CD8-positive, alpha-beta T cell (primary cell): ENCODE measurements at regions of chr19 and their contacts with region 1.

Region 1: DNA sequence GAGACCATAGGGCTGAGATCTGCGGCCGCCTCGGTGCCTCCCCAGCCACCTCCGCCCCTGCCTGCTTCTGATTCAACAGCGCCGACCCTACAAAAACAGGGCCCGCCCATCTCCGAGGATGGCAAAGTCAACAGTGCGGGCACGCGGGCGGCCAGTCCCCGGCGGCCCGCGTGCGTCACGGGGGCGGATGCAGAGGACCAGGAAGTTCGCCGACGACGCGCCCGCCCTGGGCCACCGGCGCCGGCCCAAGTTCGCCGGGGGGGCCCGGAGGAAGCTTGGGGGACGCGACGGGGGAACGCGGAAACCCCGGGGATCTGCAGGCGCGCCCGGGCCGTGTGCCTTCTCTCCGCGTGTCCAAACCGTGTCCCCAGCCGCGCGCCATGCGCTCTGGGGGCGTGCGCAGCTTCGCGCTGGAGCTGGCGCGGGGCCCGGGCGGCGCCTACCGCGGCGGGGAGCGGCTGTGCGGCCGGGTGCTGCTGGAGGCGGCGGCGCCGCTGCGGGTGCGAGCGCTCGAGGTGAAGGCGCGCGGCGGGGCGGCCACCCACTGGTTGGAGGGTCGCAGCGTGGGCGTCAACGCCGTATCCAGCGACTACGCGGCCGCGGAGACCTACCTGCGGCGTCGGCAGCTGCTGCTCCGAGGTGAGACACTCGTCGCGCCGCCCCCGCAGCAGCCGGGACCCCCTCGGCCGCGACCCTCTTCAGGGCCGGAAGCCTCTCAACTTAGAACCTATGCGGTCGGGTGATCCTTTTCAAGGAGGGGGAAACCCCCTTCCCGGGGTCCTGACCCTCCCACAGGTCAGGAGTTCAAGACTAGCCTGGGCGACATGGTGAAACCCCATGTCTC is 6.8 kb upstream of the ARRDC2 start:
- DNase-seq: peak; percentile 90 to 99 (median 96)
- ATAC-seq: peak; percentile 81
- H3K4me3 ChIP-seq: peak overlapping the region; percentile 65 to 69
- H3K4me3 Mint-ChIP-seq: peak overlapping the region; percentile 92
- H3K27ac ChIP-seq: peak overlapping the region; percentile 94
- H3K27ac Mint-ChIP-seq: peak overlapping the region; percentile 98
- H3K4me1 ChIP-seq: peaks cover 29% of the 10 kb centered on the region
- H3K4me1 Mint-ChIP-seq: peaks cover 32% of the 10 kb centered on the region
- H3K27me3 ChIP-seq: no peaks in the 10 kb centered on the region
- H3K27me3 Mint-ChIP-seq: no peaks in the 10 kb centered on the region
- CTCF ChIP-seq: no peak

Region 2: GRCh38 chr19:17703824-17704463 is 297.2 kb before region 1 on chr19:
- CTCF ChIA-PET with region 1: interaction called, 3 read pairs
- POLR2A ChIA-PET with region 1: no interaction called
- intact Hi-C with region 1: loop called in 1 of 2 experiments (anchors 10 kb)
- DNase-seq: peak; percentile 52 to 83 (median 73)
- ATAC-seq: peak; percentile 99
- H3K4me3 ChIP-seq: no peak overlapping the region
- H3K4me3 Mint-ChIP-seq: no peak overlapping the region
- H3K27ac ChIP-seq: no peak overlapping the region
- H3K27ac Mint-ChIP-seq: no peak overlapping the region
- H3K4me1 ChIP-seq: no peaks in the 10 kb centered on the region
- H3K4me1 Mint-ChIP-seq: no peaks in the 10 kb centered on the region
- H3K27me3 ChIP-seq: no peaks in the 10 kb centered on the region
- H3K27me3 Mint-ChIP-seq: peaks cover 9% of the 10 kb centered on the region
- CTCF ChIP-seq: peak; percentile 89

Region 3: GRCh38 chr19:17784201-17785008 is 216.8 kb before region 1 on chr19:
- CTCF ChIA-PET with region 1: no interaction called
- POLR2A ChIA-PET with region 1: no interaction called
- intact Hi-C with region 1: no loop called
- DNase-seq: peak; percentile 55 to 81 (median 74)
- ATAC-seq: peak; percentile 94
- H3K4me3 ChIP-seq: no peak overlapping the region
- H3K4me3 Mint-ChIP-seq: no peak overlapping the region
- H3K27ac ChIP-seq: no peak overlapping the region
- H3K27ac Mint-ChIP-seq: no peak overlapping the region
- H3K4me1 ChIP-seq: peaks cover 4% of the 10 kb centered on the region
- H3K4me1 Mint-ChIP-seq: peaks cover 11% of the 10 kb centered on the region
- H3K27me3 ChIP-seq: no peaks in the 10 kb centered on the region
- H3K27me3 Mint-ChIP-seq: no peaks in the 10 kb centered on the region
- CTCF ChIP-seq: peak; percentile 82

Region 4: DNA sequence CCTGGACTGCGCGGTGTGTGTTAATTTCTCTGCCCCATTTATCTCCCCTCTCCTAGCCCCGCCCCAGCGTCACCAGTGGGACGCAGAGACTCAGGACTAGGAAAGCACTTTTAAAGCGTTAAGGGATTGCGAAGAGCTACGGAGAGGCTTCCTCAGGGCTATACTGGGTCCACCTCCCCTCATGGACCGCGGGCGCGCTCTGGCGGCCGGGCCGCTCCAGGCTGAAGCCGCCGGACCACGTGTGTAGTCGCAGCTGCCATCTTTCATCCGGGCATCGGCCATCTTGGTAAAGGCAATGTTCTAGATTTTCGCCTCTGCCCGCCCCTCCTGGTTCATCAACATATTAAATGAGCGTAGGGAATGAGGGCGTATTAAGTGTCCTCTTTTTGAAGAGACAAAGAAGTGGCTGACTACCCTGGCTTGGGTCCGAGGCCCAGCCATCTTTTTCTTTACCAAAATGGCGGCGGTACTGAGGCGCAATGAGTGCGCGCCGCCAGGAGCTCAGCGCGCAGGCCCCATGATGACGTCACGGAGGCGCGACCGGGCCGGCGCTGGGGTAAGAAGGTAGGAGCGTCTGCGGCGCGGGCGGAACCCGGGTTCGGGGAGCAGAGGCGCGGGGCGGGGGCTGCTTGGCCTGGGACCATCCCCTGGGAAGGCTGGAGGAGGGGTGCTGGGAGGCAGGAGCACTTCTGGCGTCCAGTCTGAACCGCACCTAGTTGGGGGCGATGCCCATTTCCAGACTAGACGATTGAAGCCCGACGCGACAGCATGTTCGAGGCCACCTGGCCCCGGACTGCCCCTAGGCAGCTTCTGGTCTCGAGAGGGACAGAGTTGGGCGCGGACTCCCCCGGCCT is 68.4 kb before region 1 on chr19 and contains the start of gene CCDC124:
- CTCF ChIA-PET with region 1: interaction called, 510 read pairs
- POLR2A ChIA-PET with region 1: interaction called, 21 read pairs
- intact Hi-C with region 1: loop called in 1 of 2 experiments (anchors 2 kb)
- DNase-seq: peak; percentile 83 to 95 (median 91)
- ATAC-seq: peak; percentile 92
- H3K4me3 ChIP-seq: peak within 1 kb of the TSS; percentile 76 to 82
- H3K4me3 Mint-ChIP-seq: peak within 1 kb of the TSS; percentile 92
- H3K27ac ChIP-seq: peak within 1 kb of the TSS; percentile 75 to 99
- H3K27ac Mint-ChIP-seq: peak within 1 kb of the TSS; percentile 95
- H3K4me1 ChIP-seq: peaks cover 15% of the 10 kb centered on the region
- H3K4me1 Mint-ChIP-seq: peaks cover 21% of the 10 kb centered on the region
- H3K27me3 ChIP-seq: no peaks in the 10 kb centered on the region
- H3K27me3 Mint-ChIP-seq: no peaks in the 10 kb centered on the region
- CTCF ChIP-seq: peak; percentile 89
- total RNA-seq, gene CCDC124: 29.7 to 35.9 TPM

Region 5: DNA sequence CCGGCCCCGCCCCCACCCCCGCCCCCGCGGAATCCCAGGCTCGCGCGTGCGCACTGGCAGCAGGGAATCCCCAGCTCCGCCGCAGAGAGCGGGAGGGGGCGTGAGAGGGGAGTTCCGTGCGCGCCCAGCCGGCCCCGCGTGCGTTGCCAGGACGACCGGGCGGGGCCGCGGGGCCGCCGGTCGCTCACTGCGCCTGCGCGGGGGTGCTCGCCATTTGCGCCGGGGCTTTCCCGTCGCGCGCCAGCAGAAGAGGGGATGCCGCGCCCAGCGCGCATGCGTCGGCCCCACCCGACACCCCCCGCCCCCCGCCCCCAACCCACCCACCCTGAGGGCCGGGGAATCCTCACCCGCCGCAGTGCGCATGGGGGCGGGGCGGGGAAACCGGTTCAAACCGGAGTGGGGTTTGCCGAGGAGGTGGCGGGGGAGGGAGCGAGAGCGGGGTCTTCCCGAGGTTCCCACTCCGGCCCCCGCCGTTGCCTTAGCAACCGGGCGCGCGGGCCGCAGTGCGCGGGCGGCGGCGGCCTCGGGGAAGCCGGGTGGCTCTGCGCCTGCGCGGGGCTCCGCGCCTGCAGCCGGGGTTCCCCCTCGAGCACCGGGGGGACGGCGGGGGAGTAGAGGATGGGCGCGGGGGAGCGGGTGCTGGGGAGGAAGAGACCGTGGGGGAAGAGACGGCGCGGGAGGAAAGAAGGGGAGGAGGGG is 53.2 kb before region 1 on chr19:
- CTCF ChIA-PET with region 1: interaction called, 510 read pairs
- POLR2A ChIA-PET with region 1: interaction called, 7 read pairs
- intact Hi-C with region 1: loop called (anchors 1 kb)
- DNase-seq: peak; percentile 88 to 99 (median 95)
- ATAC-seq: peak; percentile 66
- H3K4me3 ChIP-seq: peak overlapping the region; percentile 35 to 57
- H3K4me3 Mint-ChIP-seq: peak overlapping the region; percentile 74
- H3K27ac ChIP-seq: peak overlapping the region; percentile 44 to 93
- H3K27ac Mint-ChIP-seq: no peak overlapping the region
- H3K4me1 ChIP-seq: peaks cover 53% of the 10 kb centered on the region
- H3K4me1 Mint-ChIP-seq: peaks cover 49% of the 10 kb centered on the region
- H3K27me3 ChIP-seq: peaks cover 39% of the 10 kb centered on the region in 2 experiments
- H3K27me3 Mint-ChIP-seq: peaks cover 30% of the 10 kb centered on the region
- CTCF ChIP-seq: no peak

Region 6: GRCh38 chr19:18091217-18091608 is 90.1 kb after region 1 on chr19:
- CTCF ChIA-PET with region 1: interaction called, 4 read pairs
- POLR2A ChIA-PET with region 1: interaction called, 6 read pairs
- intact Hi-C with region 1: loop called in 1 of 2 experiments (anchors 2 kb)
- DNase-seq: peak; percentile 54 to 94 (median 82)
- ATAC-seq: peak; percentile 61
- H3K4me3 ChIP-seq: peak overlapping the region in 1 of 2 experiments; percentile 3
- H3K4me3 Mint-ChIP-seq: peak overlapping the region; percentile 56
- H3K27ac ChIP-seq: peak overlapping the region; percentile 54 to 97
- H3K27ac Mint-ChIP-seq: peak overlapping the region; percentile 97
- H3K4me1 ChIP-seq: peaks cover 68% of the 10 kb centered on the region
- H3K4me1 Mint-ChIP-seq: peaks cover 68% of the 10 kb centered on the region
- H3K27me3 ChIP-seq: no peaks in the 10 kb centered on the region
- H3K27me3 Mint-ChIP-seq: no peaks in the 10 kb centered on the region
- CTCF ChIP-seq: no peak

Region 7: GRCh38 chr19:19232261-19232721 is 1231.1 kb after region 1 on chr19:
- CTCF ChIA-PET with region 1: no interaction called
- POLR2A ChIA-PET with region 1: no interaction called
- intact Hi-C with region 1: no loop called
- DNase-seq: no peak
- ATAC-seq: no peak
- H3K4me3 ChIP-seq: no peak overlapping the region
- H3K4me3 Mint-ChIP-seq: no peak overlapping the region
- H3K27ac ChIP-seq: no peak overlapping the region
- H3K27ac Mint-ChIP-seq: no peak overlapping the region
- H3K4me1 ChIP-seq: no peaks in the 10 kb centered on the region
- H3K4me1 Mint-ChIP-seq: no peaks in the 10 kb centered on the region
- H3K27me3 ChIP-seq: no peaks in the 10 kb centered on the region
- H3K27me3 Mint-ChIP-seq: peaks cover 18% of the 10 kb centered on the region
- CTCF ChIP-seq: no peak